Activated CD4-positive, alpha-beta memory T cell treated with anti-CD3 and anti-CD28 coated beads for 36 hours (primary cell): ENCODE measurements at regions of chr17 and their contacts with region 1.

Region 1: GRCh38 chr17:28494445-28495188 is 11.5 kb upstream of the FOXN1 start:
- DNase-seq: peak; percentile 87
- H3K4me3 Mint-ChIP-seq: no peak overlapping the region
- H3K27ac Mint-ChIP-seq: no peak overlapping the region
- H3K4me1 Mint-ChIP-seq: no peaks in the 10 kb centered on the region
- H3K27me3 Mint-ChIP-seq: peaks cover 3% of the 10 kb centered on the region

Region 2: DNA sequence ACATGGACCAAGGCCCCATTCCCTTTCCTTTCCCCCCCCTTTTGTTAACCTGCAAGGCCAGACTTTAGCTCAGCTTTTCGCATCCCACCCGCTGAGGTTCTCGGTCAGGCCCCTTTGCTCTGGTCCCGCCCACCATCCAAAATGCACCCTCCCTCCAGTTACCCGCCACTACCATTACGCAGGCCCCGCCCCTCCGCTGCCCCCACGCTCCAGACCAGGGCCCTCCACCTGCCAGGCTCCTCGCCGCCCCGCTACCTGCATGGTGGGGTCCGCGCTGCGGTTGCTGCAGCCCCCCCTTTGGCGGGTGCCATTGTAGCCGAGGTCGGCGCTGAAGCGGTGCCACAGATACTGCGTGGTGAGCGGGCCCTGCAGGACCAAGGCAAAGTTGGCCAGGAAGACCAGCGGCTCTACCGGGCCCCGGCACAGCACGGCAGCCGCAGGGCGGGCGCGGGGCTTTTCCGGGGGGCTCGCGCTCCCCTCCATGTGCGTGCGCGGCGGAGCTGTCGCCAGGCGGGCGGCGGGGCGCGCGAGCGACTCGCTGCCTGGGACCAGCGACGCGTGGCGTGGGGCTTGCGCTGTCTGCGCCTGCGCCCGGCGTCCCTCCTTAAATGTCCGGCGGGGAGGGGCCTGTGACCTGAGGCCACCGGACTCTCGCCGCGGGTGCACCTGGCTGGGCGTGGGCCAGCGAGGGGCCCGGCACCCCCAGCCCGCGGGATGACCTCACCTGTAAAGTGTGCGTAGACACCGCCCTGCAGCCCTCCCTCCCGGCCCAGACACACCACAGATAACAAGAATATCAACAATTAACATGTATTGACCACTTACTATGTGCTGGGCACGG is 88.8 kb before region 1 on chr17 and contains the start of gene SLC46A1:
- CTCF ChIA-PET with region 1: no interaction called
- POLR2A ChIA-PET with region 1: no interaction called
- intact Hi-C with region 1: no loop called
- DNase-seq: peak; percentile 67
- H3K4me3 Mint-ChIP-seq: peak within 1 kb of the TSS; percentile 75
- H3K27ac Mint-ChIP-seq: no peak within 1 kb of the TSS
- H3K4me1 Mint-ChIP-seq: peaks cover 13% of the 10 kb centered on the region
- H3K27me3 Mint-ChIP-seq: peaks cover 2% of the 10 kb centered on the region
- total RNA-seq, gene SLC46A1: 2.3 to 2.9 TPM

Region 3: GRCh38 chr17:28484296-28484695 is 10.3 kb before region 1 on chr17:
- CTCF ChIA-PET with region 1: interaction called, 10 read pairs
- POLR2A ChIA-PET with region 1: no interaction called
- intact Hi-C with region 1: no loop called
- DNase-seq: peak; percentile 20
- H3K4me3 Mint-ChIP-seq: no peak overlapping the region
- H3K27ac Mint-ChIP-seq: no peak overlapping the region
- H3K4me1 Mint-ChIP-seq: peaks cover 8% of the 10 kb centered on the region
- H3K27me3 Mint-ChIP-seq: no peaks in the 10 kb centered on the region

Region 4: GRCh38 chr17:28509789-28510188 is 15.2 kb after region 1 on chr17:
- CTCF ChIA-PET with region 1: no interaction called
- POLR2A ChIA-PET with region 1: no interaction called
- intact Hi-C with region 1: no loop called
- DNase-seq: no peak
- H3K4me3 Mint-ChIP-seq: no peak overlapping the region
- H3K27ac Mint-ChIP-seq: no peak overlapping the region
- H3K4me1 Mint-ChIP-seq: no peaks in the 10 kb centered on the region
- H3K27me3 Mint-ChIP-seq: peaks cover 33% of the 10 kb centered on the region

Region 5: DNA sequence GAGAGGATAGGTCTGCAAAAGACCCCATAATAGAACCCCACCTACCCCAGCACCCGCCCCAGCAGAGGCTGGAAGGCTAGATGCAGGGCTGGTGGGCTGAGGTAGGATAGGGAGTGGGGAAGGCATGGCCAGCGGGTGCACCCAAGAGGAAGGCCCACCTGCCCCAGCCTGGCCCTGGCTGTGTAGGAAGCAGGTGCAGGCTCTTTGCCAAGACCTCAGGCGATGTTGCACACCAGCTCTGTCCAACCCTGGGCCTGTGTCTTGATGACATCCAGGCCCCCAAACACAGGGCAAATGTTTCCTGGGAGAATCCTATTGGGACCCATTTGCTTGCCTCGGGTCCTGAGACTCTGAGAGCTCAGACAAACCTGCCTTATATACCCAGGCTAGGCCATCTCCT is 45.6 kb after region 1 on chr17:
- CTCF ChIA-PET with region 1: interaction called, 17 read pairs
- POLR2A ChIA-PET with region 1: no interaction called
- intact Hi-C with region 1: loop called (anchors 1 kb)
- DNase-seq: no peak
- H3K4me3 Mint-ChIP-seq: no peak overlapping the region
- H3K27ac Mint-ChIP-seq: no peak overlapping the region
- H3K4me1 Mint-ChIP-seq: no peaks in the 10 kb centered on the region
- H3K27me3 Mint-ChIP-seq: no peaks in the 10 kb centered on the region

Region 6: DNA sequence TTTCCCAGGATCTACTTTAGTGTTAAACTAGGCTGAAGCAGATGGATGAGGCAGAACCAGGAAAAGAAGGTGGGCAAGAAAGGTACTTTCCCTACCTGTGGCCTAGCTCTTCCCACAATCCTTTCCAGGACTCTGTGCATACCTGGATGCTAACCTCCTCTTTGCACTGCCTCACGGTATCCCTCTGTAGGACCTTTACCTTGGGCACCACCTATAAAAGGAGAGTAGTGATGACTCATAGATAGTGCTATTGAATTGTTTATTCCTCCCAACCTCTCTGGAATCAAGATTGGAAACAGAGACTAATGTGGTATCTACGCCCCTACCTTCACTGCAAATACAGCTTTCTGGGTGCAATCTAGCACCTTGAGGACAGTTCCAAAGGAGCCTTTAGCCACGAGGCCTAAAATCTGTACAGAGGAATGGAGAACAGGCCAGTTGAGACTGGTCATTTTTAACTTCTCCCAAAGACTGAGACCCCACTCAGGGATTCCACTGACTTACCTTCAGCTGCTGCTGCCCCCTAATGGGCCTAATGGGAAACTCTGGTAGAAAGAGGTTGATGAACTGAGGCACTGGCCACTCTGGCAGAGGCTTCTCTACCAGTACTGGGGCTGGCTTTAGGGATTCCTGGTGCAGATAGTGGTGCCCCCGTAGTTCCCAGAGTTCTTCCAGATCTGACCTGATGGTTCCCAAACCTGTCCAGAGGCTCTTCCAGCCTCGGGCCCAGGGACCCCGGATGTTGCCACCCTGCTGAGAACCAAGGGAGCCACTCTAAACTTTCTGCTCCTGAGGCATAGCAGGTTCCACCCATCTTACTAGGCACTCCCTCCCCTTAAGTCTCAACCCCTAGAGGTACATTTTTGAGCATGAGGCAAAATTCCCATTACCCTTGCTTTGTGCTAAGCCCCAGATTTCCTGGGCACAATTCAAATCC is 118.6 kb after region 1 on chr17:
- CTCF ChIA-PET with region 1: interaction called, 16 read pairs
- POLR2A ChIA-PET with region 1: no interaction called
- intact Hi-C with region 1: loop called (anchors 2 kb)
- DNase-seq: peak; percentile 32
- H3K4me3 Mint-ChIP-seq: no peak overlapping the region
- H3K27ac Mint-ChIP-seq: no peak overlapping the region
- H3K4me1 Mint-ChIP-seq: peaks cover 5% of the 10 kb centered on the region
- H3K27me3 Mint-ChIP-seq: no peaks in the 10 kb centered on the region

Region 7: GRCh38 chr17:28626818-28627217 is 132.2 kb after region 1 on chr17:
- CTCF ChIA-PET with region 1: no interaction called
- POLR2A ChIA-PET with region 1: no interaction called
- intact Hi-C with region 1: no loop called
- DNase-seq: no peak
- H3K4me3 Mint-ChIP-seq: no peak overlapping the region
- H3K27ac Mint-ChIP-seq: no peak overlapping the region
- H3K4me1 Mint-ChIP-seq: peaks cover 16% of the 10 kb centered on the region
- H3K27me3 Mint-ChIP-seq: no peaks in the 10 kb centered on the region